CD8-positive, alpha-beta T cell (primary cell): ENCODE measurements at regions of chr2 and their contacts with region 1.

Region 1: DNA sequence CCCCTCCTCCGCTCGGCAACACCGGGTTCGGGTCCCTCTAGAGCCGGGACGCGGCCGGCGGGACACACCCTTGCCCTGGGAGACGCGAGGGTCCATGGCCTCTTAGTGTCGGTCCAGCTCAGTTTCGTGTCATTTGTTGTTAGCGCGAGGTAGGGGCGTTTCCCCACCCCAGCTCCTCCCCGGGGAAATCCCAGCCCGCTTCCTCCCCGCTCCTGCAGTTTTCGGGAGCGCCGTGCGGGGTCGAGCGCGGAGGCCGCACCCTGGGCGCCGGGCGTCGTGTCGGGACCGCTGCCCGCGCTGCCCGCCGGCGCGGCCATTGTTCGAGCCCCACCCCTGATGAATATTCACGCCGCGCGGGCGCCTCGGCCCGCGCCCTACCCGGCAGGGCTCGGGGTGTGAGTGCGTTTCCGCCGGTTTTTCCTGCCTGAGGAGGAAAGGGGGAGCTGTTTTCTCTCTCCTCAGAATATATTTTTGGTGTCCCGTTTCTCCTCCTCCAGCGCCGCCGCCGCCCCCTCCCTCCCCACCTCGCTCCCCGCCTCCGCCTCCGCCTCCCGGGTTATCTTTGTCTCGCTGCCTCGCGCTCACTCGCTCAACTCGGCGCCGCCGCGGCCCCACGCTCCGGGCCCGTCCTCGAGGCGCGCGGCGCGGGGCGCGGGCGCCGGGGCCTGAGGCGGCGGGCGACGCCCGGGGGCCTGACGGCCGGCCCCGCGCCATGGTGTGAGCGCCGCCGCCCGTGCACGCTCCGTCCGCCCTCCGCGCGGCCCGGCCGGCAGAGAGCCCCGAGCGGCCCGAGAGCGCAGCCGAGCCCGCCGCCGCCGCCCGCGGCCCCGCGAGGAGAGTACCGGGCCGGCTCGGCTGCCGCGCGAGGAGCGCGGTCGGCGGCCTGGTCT is at the start of gene MAP4K4:
- DNase-seq: peak; percentile 53 to 88 (median 78)
- ATAC-seq: peak; percentile 63
- H3K4me3 ChIP-seq: peak within 1 kb of the TSS; percentile 71 to 81
- H3K4me3 Mint-ChIP-seq: peak within 1 kb of the TSS; percentile 94
- H3K27ac ChIP-seq: peak within 1 kb of the TSS; percentile 56 to 65
- H3K27ac Mint-ChIP-seq: peak within 1 kb of the TSS; percentile 96
- H3K4me1 ChIP-seq: peaks cover 34% of the 10 kb centered on the region
- H3K4me1 Mint-ChIP-seq: peaks cover 28% of the 10 kb centered on the region
- H3K27me3 ChIP-seq: no peaks in the 10 kb centered on the region
- H3K27me3 Mint-ChIP-seq: no peaks in the 10 kb centered on the region
- CTCF ChIP-seq: no peak
- total RNA-seq, gene MAP4K4: 72.4 TPM

Region 2: DNA sequence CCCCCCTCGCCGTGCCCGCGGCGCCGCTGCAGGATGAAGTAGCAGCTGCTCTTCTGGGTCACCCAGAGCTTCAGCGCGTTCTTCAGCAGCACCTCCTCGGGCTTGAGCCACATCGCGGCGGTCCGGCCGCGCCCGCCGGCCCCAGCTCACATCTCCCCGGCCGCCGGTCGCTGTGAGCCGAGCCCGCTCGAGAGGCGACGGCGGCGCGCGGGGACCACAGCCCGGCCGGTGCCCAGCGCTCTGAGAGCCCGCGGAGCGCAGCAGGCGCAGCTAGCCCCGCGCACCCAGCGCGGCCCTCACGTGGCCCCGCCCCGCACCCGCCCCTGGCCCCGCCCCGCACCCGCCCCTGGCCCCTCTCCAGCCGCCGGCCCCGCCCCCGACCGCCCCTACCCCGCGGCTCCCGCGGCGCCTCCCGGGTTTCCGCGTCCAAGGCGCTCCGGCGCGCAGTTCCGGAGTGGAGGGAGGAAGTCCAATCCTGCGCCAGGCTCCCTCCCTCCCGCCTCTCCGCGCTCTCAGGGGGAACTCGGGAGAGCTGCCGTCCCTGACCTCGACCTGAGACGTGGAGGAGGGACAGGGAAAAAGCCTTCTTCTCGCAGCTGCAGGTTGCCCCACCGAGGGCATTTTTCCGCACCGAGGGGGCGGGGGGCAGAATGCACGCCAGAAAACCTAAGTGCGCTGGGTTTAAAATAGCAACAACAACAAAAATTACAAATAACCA is 546.1 kb before region 1 on chr2 and contains the start of gene TBC1D8:
- CTCF ChIA-PET with region 1: no interaction called
- POLR2A ChIA-PET with region 1: no interaction called
- intact Hi-C with region 1: loop called in 1 of 2 experiments (anchors 5 kb)
- DNase-seq: peak in 8 of 9 experiments; percentile 45 to 78 (median 56)
- ATAC-seq: peak; percentile 83
- H3K4me3 ChIP-seq: peak within 1 kb of the TSS; percentile 38 to 56
- H3K4me3 Mint-ChIP-seq: peak within 1 kb of the TSS; percentile 87
- H3K27ac ChIP-seq: peak within 1 kb of the TSS in 1 of 2 experiments; percentile 40
- H3K27ac Mint-ChIP-seq: no peak within 1 kb of the TSS
- H3K4me1 ChIP-seq: peaks cover 25% of the 10 kb centered on the region
- H3K4me1 Mint-ChIP-seq: peaks cover 25% of the 10 kb centered on the region
- H3K27me3 ChIP-seq: peaks cover 0 to 6% of the 10 kb centered on the region in 2 experiments
- H3K27me3 Mint-ChIP-seq: peaks cover 8% of the 10 kb centered on the region
- CTCF ChIP-seq: no peak
- total RNA-seq, gene TBC1D8: 0.47 to 1.1 TPM

Region 3: DNA sequence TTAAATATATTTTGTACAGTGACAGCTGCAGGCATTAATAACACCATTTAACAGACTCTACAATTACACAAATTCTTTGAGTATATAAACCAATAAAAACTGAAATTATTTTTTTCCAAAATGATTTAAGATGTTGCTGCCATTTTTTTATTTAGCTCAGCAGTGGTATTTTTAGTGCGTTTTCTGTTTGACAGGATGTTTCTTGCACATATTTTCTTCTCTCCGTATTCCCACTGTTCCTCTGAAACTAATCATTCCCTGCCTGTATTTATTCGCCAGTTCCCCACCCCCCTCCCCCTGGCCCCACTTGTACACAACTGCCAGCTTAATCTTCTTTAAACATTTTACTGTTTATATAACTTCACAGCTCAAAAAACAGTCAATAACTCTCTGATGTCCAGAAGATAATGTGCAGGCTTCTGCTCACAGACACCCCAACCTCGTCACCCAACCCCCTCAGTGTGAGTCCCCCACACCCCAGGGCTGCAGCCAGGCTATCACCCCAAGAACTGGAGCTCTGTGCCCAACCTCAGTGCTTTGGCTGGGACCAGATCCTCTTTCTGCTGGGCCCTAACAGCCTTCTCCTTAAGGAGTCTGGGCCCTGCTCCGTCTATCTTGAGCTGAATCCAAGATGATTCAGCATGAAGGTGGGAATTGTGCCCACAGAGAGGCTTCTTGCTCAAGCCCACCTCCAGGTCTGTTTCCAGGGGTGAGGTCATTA is 41.5 kb before region 1 on chr2:
- CTCF ChIA-PET with region 1: no interaction called
- POLR2A ChIA-PET with region 1: no interaction called
- intact Hi-C with region 1: loop called in 1 of 2 experiments (anchors 5 kb)
- DNase-seq: no peak
- ATAC-seq: no peak
- H3K4me3 ChIP-seq: no peak overlapping the region
- H3K4me3 Mint-ChIP-seq: no peak overlapping the region
- H3K27ac ChIP-seq: no peak overlapping the region
- H3K27ac Mint-ChIP-seq: no peak overlapping the region
- H3K4me1 ChIP-seq: peaks cover 12% of the 10 kb centered on the region
- H3K4me1 Mint-ChIP-seq: peaks cover 13% of the 10 kb centered on the region
- H3K27me3 ChIP-seq: no peaks in the 10 kb centered on the region
- H3K27me3 Mint-ChIP-seq: no peaks in the 10 kb centered on the region
- CTCF ChIP-seq: no peak

Region 4: DNA sequence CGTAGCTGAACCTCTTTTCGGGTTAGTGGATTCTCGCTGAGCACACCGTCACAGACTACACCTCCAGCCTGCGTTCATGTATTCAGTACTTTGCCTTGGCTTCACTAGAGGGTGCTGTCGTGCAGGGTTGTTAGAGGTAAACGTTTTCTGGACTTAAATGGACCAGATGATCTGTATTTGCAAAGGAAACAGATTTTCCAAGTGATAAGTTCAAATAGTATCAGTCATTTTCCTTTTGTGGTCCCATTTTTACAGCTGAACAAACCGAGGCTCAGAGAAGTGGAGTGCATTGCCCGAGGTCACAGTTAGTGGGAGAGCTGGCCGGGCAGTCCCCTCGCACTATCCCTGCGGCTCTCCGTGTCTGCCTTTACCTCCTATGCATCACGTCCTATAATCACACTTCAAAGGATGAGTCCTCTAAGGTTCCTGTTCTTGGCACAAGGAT is 126.0 kb after region 1 on chr2:
- CTCF ChIA-PET with region 1: interaction called, 13 read pairs
- POLR2A ChIA-PET with region 1: interaction called, 6 read pairs
- intact Hi-C with region 1: loop called (anchors 2 to 5 kb)
- DNase-seq: peak; percentile 39 to 84 (median 71)
- ATAC-seq: peak; percentile 90
- H3K4me3 ChIP-seq: no peak overlapping the region
- H3K4me3 Mint-ChIP-seq: peak overlapping the region; percentile 62
- H3K27ac ChIP-seq: peak overlapping the region in 1 of 2 experiments; percentile 52
- H3K27ac Mint-ChIP-seq: peak overlapping the region; percentile 91
- H3K4me1 ChIP-seq: peaks cover 51% of the 10 kb centered on the region
- H3K4me1 Mint-ChIP-seq: peaks cover 76% of the 10 kb centered on the region
- H3K27me3 ChIP-seq: no peaks in the 10 kb centered on the region
- H3K27me3 Mint-ChIP-seq: no peaks in the 10 kb centered on the region
- CTCF ChIP-seq: peak; percentile 82

Region 5: DNA sequence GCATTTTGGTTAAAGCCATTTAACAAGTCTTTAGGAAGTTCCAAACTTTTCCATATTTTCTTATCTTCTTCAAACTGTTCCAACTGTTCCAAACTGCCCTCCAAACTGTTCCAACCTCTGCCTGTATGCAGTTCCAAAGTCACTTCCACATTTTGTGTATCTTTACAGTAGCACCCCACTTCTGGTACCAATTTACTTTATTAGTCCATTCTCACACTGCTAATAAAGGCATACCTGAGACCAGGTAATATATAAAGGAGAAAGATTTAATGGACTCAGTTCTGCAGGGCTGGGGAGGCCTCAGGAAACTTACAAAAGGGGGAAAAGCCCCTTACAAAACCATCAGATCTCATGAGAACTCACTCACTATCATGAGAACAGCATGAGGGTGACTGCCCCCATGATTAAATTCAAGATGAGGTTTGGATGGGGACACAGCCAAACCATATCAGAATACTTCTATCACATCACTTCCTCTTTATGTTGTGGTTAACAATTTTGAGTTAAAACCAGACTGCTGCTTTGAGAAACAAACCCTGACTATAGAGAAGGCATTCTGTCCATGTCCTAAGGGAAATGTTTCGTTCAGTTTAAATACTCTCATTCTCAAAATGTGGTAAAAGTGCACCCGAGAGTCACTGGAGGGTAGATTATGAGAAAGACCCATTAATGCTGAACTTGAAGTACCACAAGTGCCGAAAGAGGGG is 669.2 kb after region 1 on chr2:
- CTCF ChIA-PET with region 1: no interaction called
- POLR2A ChIA-PET with region 1: no interaction called
- intact Hi-C with region 1: loop called in 1 of 2 experiments (anchors 10 kb)
- DNase-seq: peak in 2 of 9 experiments; percentile 54 to 73
- ATAC-seq: peak; percentile 24
- H3K4me3 ChIP-seq: peak overlapping the region; percentile 13 to 16
- H3K4me3 Mint-ChIP-seq: peak overlapping the region; percentile 63
- H3K27ac ChIP-seq: peak overlapping the region; percentile 22 to 56
- H3K27ac Mint-ChIP-seq: peak overlapping the region; percentile 89
- H3K4me1 ChIP-seq: peaks cover 36% of the 10 kb centered on the region
- H3K4me1 Mint-ChIP-seq: peaks cover 62% of the 10 kb centered on the region
- H3K27me3 ChIP-seq: no peaks in the 10 kb centered on the region
- H3K27me3 Mint-ChIP-seq: no peaks in the 10 kb centered on the region
- CTCF ChIP-seq: no peak